Left lung (tissue), 14 donors: ENCODE measurements at regions of chr6 and their contacts with region 1.

Region 1: GRCh38 chr6:32984605-32985389 is 16.4 kb downstream of the BRD2 start:
- DNase-seq: peak; percentile 70 to 92 (median 88)
- ATAC-seq: peak; percentile 94
- H3K4me3 ChIP-seq: no peak overlapping the region
- H3K27ac ChIP-seq: peak overlapping the region in 1 of 2 donors; percentile 55
- H3K4me1 ChIP-seq: peaks cover 0 to 29% of the 10 kb centered on the region in 2 donors
- H3K27me3 ChIP-seq: no peaks in the 10 kb centered on the region
- CTCF ChIP-seq: peak; percentile 72 to 74

Region 2: GRCh38 chr6:32885698-32886286 is 99.0 kb before region 1 on chr6:
- intact Hi-C with region 1: loop called in 1 of 2 experiments (anchors 5 kb)
- DNase-seq: peak in 2 of 4 donors; percentile 62 to 78
- ATAC-seq: peak; percentile 79
- H3K4me3 ChIP-seq: no peak overlapping the region
- H3K27ac ChIP-seq: no peak overlapping the region
- H3K4me1 ChIP-seq: peaks cover 0 to 19% of the 10 kb centered on the region in 2 donors
- H3K27me3 ChIP-seq: peaks cover 0 to under 1% of the 10 kb centered on the region in 2 donors
- CTCF ChIP-seq: peak; percentile 48 to 55

Region 3: GRCh38 chr6:32933636-32934085 is 51.1 kb before region 1 on chr6:
- intact Hi-C with region 1: loop called (anchors 5 to 10 kb)
- DNase-seq: peak; percentile 59 to 85 (median 78)
- ATAC-seq: peak; percentile 86
- H3K4me3 ChIP-seq: no peak overlapping the region
- H3K27ac ChIP-seq: no peak overlapping the region
- H3K4me1 ChIP-seq: peaks cover 0 to 46% of the 10 kb centered on the region in 2 donors
- H3K27me3 ChIP-seq: no peaks in the 10 kb centered on the region
- CTCF ChIP-seq: peak; percentile 64 to 66

Region 4: GRCh38 chr6:33132081-33132524 is 147.3 kb after region 1 on chr6:
- intact Hi-C with region 1: no loop called
- DNase-seq: no peak
- ATAC-seq: no peak
- H3K4me3 ChIP-seq: no peak overlapping the region
- H3K27ac ChIP-seq: peak overlapping the region in 1 of 2 donors; percentile 37
- H3K4me1 ChIP-seq: no peaks in the 10 kb centered on the region
- H3K27me3 ChIP-seq: peaks cover 0 to 5% of the 10 kb centered on the region in 2 donors
- CTCF ChIP-seq: no peak